Naive thymus-derived CD4-positive, alpha-beta T cell (primary cell): ENCODE measurements at regions of chr13 and their contacts with region 1.

Region 1: GRCh38 chr13:82571653-82572052 is 1310.6 kb downstream of the SLITRK1 start:
- DNase-seq: no peak
- ATAC-seq: no peak
- H3K4me3 ChIP-seq: no peak overlapping the region
- H3K4me3 Mint-ChIP-seq: no peak overlapping the region
- H3K27ac ChIP-seq: no peak overlapping the region
- H3K27ac Mint-ChIP-seq: no peak overlapping the region
- H3K4me1 ChIP-seq: no peaks in the 10 kb centered on the region
- H3K4me1 Mint-ChIP-seq: no peaks in the 10 kb centered on the region
- H3K27me3 ChIP-seq: no peaks in the 10 kb centered on the region
- H3K27me3 Mint-ChIP-seq: no peaks in the 10 kb centered on the region

Region 2: GRCh38 chr13:82010780-82011179 is 560.9 kb before region 1 on chr13:
- CTCF ChIA-PET with region 1: no interaction called
- POLR2A ChIA-PET with region 1: no interaction called
- intact Hi-C with region 1: no loop called
- DNase-seq: no peak
- ATAC-seq: no peak
- H3K4me3 ChIP-seq: no peak overlapping the region
- H3K4me3 Mint-ChIP-seq: no peak overlapping the region
- H3K27ac ChIP-seq: no peak overlapping the region
- H3K27ac Mint-ChIP-seq: no peak overlapping the region
- H3K4me1 ChIP-seq: no peaks in the 10 kb centered on the region
- H3K4me1 Mint-ChIP-seq: no peaks in the 10 kb centered on the region
- H3K27me3 ChIP-seq: no peaks in the 10 kb centered on the region
- H3K27me3 Mint-ChIP-seq: no peaks in the 10 kb centered on the region

Region 3: GRCh38 chr13:82636124-82636523 is 64.5 kb after region 1 on chr13:
- CTCF ChIA-PET with region 1: no interaction called
- POLR2A ChIA-PET with region 1: no interaction called
- intact Hi-C with region 1: loop called in 1 of 2 experiments (anchors 10 kb)
- DNase-seq: no peak
- ATAC-seq: no peak
- H3K4me3 ChIP-seq: no peak overlapping the region
- H3K4me3 Mint-ChIP-seq: no peak overlapping the region
- H3K27ac ChIP-seq: no peak overlapping the region
- H3K27ac Mint-ChIP-seq: no peak overlapping the region
- H3K4me1 ChIP-seq: no peaks in the 10 kb centered on the region
- H3K4me1 Mint-ChIP-seq: no peaks in the 10 kb centered on the region
- H3K27me3 ChIP-seq: no peaks in the 10 kb centered on the region
- H3K27me3 Mint-ChIP-seq: no peaks in the 10 kb centered on the region

Region 4: DNA sequence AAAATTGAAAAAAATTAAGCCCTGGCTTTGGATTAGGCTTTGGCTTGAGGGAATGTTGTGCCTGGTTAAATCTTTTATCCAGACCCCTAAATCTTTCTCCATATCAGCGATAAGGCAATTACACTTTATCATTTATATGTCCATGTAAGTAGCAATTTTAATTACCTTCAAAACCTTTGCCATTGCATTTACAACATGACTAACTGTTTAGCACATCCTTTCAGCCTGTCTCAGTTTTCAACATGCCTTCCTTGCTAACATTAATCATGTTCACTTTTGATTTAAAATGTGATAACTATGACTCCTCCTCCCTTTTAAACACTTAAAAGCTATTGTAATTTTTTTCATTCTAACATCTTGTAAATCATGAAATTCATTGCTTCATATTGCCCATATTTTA is 727.0 kb after region 1 on chr13:
- CTCF ChIA-PET with region 1: no interaction called
- POLR2A ChIA-PET with region 1: no interaction called
- intact Hi-C with region 1: no loop called
- DNase-seq: no peak
- ATAC-seq: no peak
- H3K4me3 ChIP-seq: no peak overlapping the region
- H3K4me3 Mint-ChIP-seq: no peak overlapping the region
- H3K27ac ChIP-seq: no peak overlapping the region
- H3K27ac Mint-ChIP-seq: no peak overlapping the region
- H3K4me1 ChIP-seq: no peaks in the 10 kb centered on the region
- H3K4me1 Mint-ChIP-seq: no peaks in the 10 kb centered on the region
- H3K27me3 ChIP-seq: no peaks in the 10 kb centered on the region
- H3K27me3 Mint-ChIP-seq: no peaks in the 10 kb centered on the region